Gastrocnemius medialis (tissue), 4 donors: ENCODE measurements at regions of chr2 and their contacts with region 1.

Region 1: GRCh38 chr2:119240311-119241202 is 16.9 kb downstream of the STEAP3 start:
- DNase-seq: peak; percentile 96 to 99
- ATAC-seq: peak; percentile 91
- H3K4me3 ChIP-seq: peak overlapping the region in 1 of 4 donors; percentile 29
- H3K27ac ChIP-seq: peak overlapping the region; percentile 86 to 95 (median 94)
- H3K4me1 ChIP-seq: peaks cover 66 to 68% of the 10 kb centered on the region in 2 donors
- H3K27me3 ChIP-seq: no peaks in the 10 kb centered on the region
- CTCF ChIP-seq: no peak
- POLR2A ChIP-seq: peak in 1 of 2 donors; percentile 45

Region 2: GRCh38 chr2:118847497-118848172 is 392.9 kb before region 1 on chr2 and contains the start of gene EN1:
- in situ Hi-C with region 1: no loop called
- intact Hi-C with region 1: loop called (anchors 5 kb)
- DNase-seq: peak; percentile 88 to 94
- ATAC-seq: peak; percentile 46 to 52
- H3K4me3 ChIP-seq: peak within 1 kb of the TSS; percentile 56 to 93 (median 80)
- H3K27ac ChIP-seq: peak within 1 kb of the TSS; percentile 92 to 97 (median 96)
- H3K4me1 ChIP-seq: peaks cover 5 to 9% of the 10 kb centered on the region in 2 donors
- H3K27me3 ChIP-seq: no peaks in the 10 kb centered on the region
- CTCF ChIP-seq: no peak
- POLR2A ChIP-seq: peak; percentile 83 to 86
- total RNA-seq, gene EN1: 3.9 to 11.0 (median 6.7) TPM

Region 3: GRCh38 chr2:119223521-119224390 is 16.8 kb before region 1 on chr2 and contains the start of gene STEAP3:
- in situ Hi-C with region 1: no loop called
- intact Hi-C with region 1: loop called (anchors 2 kb)
- DNase-seq: peak; percentile 62 to 81
- ATAC-seq: peak; percentile 71 to 72
- H3K4me3 ChIP-seq: peak within 1 kb of the TSS; percentile 77 to 88 (median 88)
- H3K27ac ChIP-seq: peak within 1 kb of the TSS; percentile 92 to 98 (median 96)
- H3K4me1 ChIP-seq: peaks cover 28 to 29% of the 10 kb centered on the region in 2 donors
- H3K27me3 ChIP-seq: no peaks in the 10 kb centered on the region
- CTCF ChIP-seq: no peak
- POLR2A ChIP-seq: peak; percentile 90 to 94
- total RNA-seq, gene STEAP3: 10.1 to 21.7 (median 10.6) TPM

Region 4: DNA sequence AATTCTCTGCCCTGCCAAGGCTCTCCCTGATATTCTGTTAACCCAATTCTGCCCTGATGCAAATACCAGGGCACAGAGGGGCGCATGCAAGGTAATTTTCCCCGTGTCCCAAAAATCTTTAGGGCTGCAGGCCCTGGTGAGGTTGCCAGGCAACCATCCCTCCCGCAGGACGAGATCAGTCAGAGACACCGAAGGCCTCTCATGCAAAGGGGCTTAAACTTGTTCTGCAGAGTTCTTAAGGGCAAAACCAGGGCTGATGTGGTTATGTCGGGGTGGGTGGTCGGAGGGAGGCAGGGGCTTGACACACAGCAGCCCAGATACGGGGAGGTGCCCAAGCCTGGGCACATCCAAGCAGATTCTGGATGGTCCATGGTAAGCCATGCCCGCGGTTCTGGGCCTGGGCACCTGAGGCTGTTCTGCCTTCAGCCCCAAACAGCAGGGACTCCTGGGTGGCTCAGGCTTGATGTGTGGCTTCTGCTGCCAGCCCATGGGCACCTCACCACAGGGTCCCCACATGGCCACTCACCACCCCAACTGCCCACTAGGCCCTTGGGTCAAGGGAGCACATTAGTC is 10.2 kb after region 1 on chr2:
- in situ Hi-C with region 1: no loop called
- intact Hi-C with region 1: loop called (anchors 1 kb)
- DNase-seq: no peak
- ATAC-seq: no peak
- H3K4me3 ChIP-seq: no peak overlapping the region
- H3K27ac ChIP-seq: peak overlapping the region in 3 of 4 donors; percentile 72 to 94 (median 86)
- H3K4me1 ChIP-seq: peaks cover 22 to 23% of the 10 kb centered on the region in 2 donors
- H3K27me3 ChIP-seq: no peaks in the 10 kb centered on the region
- CTCF ChIP-seq: no peak
- POLR2A ChIP-seq: no peak

Region 5: GRCh38 chr2:119283860-119284331 is 43.3 kb after region 1 on chr2:
- in situ Hi-C with region 1: no loop called
- intact Hi-C with region 1: loop called (anchors 1 kb)
- DNase-seq: peak; percentile 94 to 97
- ATAC-seq: peak; percentile 96
- H3K4me3 ChIP-seq: no peak overlapping the region
- H3K27ac ChIP-seq: peak overlapping the region; percentile 77 to 90 (median 83)
- H3K4me1 ChIP-seq: peaks cover 14 to 18% of the 10 kb centered on the region in 2 donors
- H3K27me3 ChIP-seq: no peaks in the 10 kb centered on the region
- CTCF ChIP-seq: no peak
- POLR2A ChIP-seq: no peak

Region 6: DNA sequence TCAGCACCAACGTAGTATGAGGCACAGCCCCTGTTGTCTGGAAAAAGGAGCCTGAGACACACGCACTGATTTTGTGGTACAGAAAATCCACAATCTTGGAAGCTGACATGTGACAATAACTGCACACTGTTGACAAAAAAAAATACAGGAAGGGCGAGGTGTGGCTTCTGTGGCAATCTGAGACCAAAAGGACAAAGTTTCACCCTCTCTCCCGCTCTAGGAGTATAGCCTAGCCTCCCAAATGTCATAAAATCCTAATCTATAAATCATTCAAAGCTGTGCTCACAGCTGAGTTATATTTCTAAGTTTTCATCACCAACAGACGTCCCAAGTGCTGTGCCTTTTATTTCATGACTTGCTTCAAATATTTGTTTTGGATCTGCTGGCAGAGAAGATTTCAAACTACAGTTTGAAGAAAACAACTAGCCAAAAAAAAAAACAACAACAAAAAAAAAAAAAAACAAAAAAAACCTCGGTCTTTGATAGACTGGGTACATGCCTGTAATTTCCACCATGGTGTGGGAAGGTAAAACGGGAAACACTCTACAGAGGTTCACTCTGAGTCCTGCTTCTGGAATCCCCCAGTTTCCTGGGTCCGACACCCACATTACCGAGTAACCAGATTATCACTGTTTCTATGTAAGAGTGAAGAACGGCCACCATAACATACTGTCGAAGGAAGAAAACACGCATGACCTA is 65.1 kb after region 1 on chr2:
- in situ Hi-C with region 1: no loop called
- intact Hi-C with region 1: loop called (anchors 5 kb)
- DNase-seq: no peak
- ATAC-seq: peak; percentile 60 to 77
- H3K4me3 ChIP-seq: peak overlapping the region; percentile 24 to 49 (median 42)
- H3K27ac ChIP-seq: peak overlapping the region; percentile 82 to 90 (median 85)
- H3K4me1 ChIP-seq: peaks cover 8 to 19% of the 10 kb centered on the region in 2 donors
- H3K27me3 ChIP-seq: no peaks in the 10 kb centered on the region
- CTCF ChIP-seq: no peak
- POLR2A ChIP-seq: no peak